Activated naive CD4-positive, alpha-beta T cell treated with anti-CD3 and anti-CD28 coated beads for 36 hours (primary cell): ENCODE measurements at regions of chr17 and their contacts with region 1.

Region 1: GRCh38 chr17:28951991-28952975 is 965 bp upstream of the PHF12 start:
- DNase-seq: peak; percentile 98
- H3K4me3 Mint-ChIP-seq: no peak overlapping the region
- H3K27ac Mint-ChIP-seq: no peak overlapping the region
- H3K4me1 Mint-ChIP-seq: peaks cover 17% of the 10 kb centered on the region
- H3K27me3 Mint-ChIP-seq: no peaks in the 10 kb centered on the region

Region 2: DNA sequence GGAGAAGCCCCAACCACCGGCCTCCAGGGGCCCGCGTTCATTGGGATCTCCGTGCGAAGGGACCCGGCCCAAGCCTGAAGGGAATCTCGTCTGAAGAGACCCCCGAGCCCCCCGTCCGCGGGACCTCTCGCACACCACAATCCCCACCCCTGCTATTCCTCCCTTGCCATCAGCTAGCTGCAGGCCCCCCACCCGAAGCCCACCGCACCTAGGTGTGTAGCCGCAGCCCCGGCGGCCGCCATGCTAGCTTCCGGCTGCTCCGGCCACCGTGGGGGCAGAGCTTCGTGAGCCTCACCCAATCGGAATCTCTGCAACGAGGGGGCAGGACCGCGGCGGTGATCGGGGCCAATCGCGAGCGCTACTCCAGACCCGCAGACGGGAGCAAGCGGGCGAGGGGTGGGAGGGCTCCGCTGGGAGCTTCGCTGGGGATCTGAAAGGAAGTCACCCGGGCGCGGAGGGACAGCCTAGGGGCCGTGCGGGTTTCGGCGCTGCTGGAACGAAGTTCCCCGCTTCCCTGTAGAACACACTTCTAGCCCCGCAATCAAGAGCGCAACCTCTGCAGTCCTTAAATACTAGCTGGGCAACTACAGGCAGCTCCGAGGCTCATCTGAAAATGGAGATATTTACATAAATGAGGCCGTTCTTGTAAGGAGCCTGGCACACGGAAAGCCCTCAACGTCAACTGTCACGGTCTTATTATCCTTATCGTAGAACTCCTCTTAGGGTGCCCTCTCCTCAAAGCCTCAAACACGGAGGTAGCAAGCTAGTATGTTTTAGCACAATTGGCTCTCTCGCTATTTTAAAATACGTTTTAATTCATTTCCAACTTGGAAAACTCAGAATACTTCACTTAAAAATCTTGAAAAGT is 380.8 kb before region 1 on chr17 and contains the start of gene PIGS:
- CTCF ChIA-PET with region 1: no interaction called
- intact Hi-C with region 1: loop called (anchors 10 kb)
- DNase-seq: peak; percentile 96
- H3K4me3 Mint-ChIP-seq: peak within 1 kb of the TSS; percentile 85
- H3K27ac Mint-ChIP-seq: peak within 1 kb of the TSS; percentile 91
- H3K4me1 Mint-ChIP-seq: peaks cover 50% of the 10 kb centered on the region
- H3K27me3 Mint-ChIP-seq: no peaks in the 10 kb centered on the region
- total RNA-seq, gene PIGS: 34.8 to 36.0 TPM

Region 3: DNA sequence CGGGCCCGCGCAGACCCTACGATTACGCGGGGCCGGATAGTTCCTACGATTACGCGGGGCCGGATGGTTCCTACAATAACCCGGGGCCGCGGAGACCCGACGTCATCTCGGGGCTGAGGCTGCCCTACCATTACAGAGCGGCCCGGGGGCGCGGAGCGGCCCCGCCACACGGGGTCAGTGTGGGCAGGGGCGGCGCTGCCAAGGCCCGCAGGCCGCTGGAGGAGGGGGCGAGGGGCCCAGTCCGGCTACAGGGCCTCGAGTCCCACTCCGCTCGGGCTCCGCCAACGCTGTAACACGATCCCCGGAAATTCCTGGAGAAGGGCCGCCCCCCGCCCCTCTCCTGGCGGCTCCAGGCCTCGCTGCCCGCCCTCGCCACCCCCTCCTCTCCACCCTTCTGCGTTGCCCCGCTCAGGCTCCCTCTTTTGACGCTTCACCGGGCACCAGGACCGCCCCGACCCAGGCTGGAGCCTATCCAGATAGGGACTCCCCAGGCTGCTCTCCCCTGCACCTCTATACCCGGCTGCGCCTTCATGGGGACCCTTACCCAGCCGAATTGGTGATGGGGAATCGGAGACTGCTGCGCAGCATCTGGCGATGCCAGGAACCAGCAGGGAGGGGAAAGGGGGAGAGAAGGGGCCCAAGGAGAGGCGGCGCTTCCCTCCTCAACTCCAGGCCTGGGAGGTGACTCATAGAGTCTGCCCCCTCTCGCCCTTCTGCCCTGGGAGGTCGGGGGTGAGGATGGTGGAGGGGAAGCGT is 234.5 kb before region 1 on chr17 and contains the start of gene RAB34:
- CTCF ChIA-PET with region 1: interaction called, 5 read pairs
- intact Hi-C with region 1: loop called (anchors 1 kb)
- DNase-seq: peak; percentile 22
- H3K4me3 Mint-ChIP-seq: peak within 1 kb of the TSS; percentile 66
- H3K27ac Mint-ChIP-seq: peak within 1 kb of the TSS; percentile 59
- H3K4me1 Mint-ChIP-seq: peaks cover 33% of the 10 kb centered on the region
- H3K27me3 Mint-ChIP-seq: peaks cover 25% of the 10 kb centered on the region
- total RNA-seq, gene RAB34: 10.2 to 12.3 TPM

Region 4: DNA sequence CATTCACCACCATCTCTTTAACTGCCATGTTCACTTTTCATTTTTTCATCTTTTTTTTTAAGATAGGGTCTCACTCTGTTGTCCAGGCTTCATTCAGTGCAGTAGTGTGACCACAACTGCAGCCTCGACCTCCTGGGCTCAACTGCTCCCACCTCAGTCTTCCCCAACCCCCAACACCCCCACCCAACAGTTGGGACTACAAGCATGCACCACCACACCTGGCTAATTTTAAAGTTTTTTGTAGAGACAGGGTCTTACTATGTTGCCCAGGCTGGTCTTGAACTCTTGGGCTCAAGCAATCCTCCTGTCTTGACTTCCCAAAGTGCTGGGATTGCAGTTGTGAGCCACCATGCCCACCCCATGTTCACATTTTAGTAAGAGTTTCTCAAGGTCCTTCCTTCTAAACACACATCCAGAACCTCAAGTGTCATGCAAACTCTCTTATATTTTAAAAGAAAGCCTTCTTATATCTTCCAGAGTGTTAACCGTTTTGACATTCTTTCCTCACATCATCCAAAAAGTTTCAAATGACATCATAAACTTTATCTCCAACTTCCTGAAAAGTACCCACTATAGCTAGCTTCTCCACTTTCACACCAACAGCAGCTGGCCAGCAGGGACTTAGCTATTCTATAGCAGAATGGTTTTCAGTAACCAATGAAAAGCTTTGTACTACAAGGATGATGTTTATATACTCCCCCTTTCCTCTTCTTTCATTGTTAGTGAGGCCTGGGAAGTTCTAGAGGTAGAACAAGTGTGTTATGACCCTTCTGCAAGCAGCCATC is 159.2 kb before region 1 on chr17:
- CTCF ChIA-PET with region 1: no interaction called
- intact Hi-C with region 1: no loop called
- DNase-seq: no peak
- H3K4me3 Mint-ChIP-seq: no peak overlapping the region
- H3K27ac Mint-ChIP-seq: no peak overlapping the region
- H3K4me1 Mint-ChIP-seq: peaks cover 29% of the 10 kb centered on the region
- H3K27me3 Mint-ChIP-seq: no peaks in the 10 kb centered on the region

Region 5: GRCh38 chr17:28812091-28812747 is 140.1 kb before region 1 on chr17:
- CTCF ChIA-PET with region 1: no interaction called
- intact Hi-C with region 1: loop called (anchors 1 kb)
- DNase-seq: peak; percentile 98
- H3K4me3 Mint-ChIP-seq: peak overlapping the region; percentile 82
- H3K27ac Mint-ChIP-seq: peak overlapping the region; percentile 86
- H3K4me1 Mint-ChIP-seq: peaks cover 50% of the 10 kb centered on the region
- H3K27me3 Mint-ChIP-seq: no peaks in the 10 kb centered on the region

Region 6: DNA sequence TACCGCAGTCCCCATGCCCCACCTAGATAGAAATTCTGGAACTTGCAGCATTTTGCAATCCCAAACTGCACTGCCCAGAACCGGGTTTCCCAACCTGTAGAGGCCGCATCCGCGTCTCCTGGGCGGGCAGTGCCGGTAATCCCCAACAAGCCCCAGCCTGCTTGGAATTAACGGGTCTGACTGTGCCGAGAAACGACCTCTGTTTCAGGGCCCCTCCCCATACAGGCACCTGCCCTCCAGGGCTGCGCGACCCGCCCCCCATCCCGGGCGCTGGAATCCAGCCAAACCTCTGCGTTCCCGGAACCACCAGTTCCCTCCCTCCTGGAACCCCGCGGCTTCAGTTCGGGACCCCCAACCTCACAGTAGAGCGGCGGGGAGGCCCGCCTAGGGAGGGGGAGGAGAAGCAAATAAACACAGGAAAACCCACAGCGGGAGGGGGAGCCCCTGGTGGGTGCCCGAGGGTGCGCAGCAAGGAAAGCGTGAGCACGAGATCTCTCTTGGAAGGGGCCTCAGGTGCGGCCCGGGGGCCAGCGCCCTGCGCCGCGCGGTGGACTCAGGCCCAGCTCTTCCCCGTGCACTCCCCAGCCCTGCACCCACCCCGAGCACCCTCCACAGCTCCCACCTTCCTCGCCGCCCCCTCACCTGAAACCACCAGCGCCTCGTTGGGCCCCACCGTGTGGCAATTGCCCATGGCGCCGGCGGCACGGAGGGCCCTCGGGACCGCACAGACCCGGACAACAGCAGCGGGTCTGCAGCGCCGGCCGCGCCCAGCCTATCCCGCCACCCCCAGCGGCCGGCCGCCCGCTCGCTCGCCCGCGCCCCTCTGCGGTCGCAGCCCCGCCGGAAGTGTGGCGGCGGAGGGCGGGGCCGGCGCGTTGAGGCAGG is 55.2 kb before region 1 on chr17 and contains the start of gene FLOT2:
- CTCF ChIA-PET with region 1: interaction called, 7 read pairs
- intact Hi-C with region 1: loop called (anchors 1 kb)
- DNase-seq: peak; percentile 88
- H3K4me3 Mint-ChIP-seq: peak within 1 kb of the TSS; percentile 94
- H3K27ac Mint-ChIP-seq: peak within 1 kb of the TSS; percentile 93
- H3K4me1 Mint-ChIP-seq: peaks cover 72% of the 10 kb centered on the region
- H3K27me3 Mint-ChIP-seq: no peaks in the 10 kb centered on the region
- total RNA-seq, gene FLOT2: 66.0 to 71.5 TPM

Region 7: DNA sequence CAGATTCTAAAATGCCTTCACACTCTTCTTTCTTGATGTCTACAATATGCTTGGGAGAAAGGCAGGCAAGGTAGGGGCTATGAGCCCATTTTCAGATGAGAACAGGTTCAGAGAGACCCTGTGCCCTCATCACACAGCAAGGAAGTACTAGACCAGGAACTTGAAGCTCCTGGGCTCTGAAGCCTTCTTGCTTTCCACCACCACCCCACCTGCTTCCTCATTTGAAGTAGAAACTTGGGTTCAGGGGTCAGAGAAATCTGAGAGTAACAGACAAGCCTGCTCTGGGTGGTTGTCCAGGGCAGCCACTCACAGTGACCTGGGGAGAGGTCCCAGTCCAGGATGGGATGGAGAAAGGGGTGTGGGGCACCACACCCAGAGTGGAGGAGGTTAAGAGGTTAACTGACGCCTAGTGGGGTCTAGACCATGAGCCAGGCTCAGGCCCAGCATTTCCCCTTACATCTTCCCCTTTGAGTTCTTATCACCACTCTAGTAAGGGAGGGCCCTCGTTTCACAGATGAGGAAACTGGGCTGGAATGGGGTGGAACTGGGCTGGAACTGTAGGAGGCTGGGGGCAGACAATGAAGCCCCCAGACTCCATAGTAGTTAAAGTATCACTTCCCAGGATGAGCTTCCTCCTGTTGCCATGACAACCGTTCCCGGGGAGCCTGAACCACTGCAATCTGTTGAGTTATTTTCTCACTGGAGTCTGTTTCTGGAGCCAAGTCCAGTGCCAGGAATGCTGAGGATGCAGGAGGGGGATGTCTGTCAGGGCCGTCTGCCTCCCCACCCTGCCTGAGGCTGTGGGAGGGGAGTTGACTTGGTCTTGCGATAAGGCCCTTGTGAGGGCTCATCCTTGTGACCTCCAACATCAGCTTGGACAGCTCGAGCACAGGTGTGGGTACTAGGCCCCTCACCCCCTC is 15.2 kb after region 1 on chr17:
- CTCF ChIA-PET with region 1: interaction called, 26 read pairs
- intact Hi-C with region 1: no loop called
- DNase-seq: no peak
- H3K4me3 Mint-ChIP-seq: no peak overlapping the region
- H3K27ac Mint-ChIP-seq: no peak overlapping the region
- H3K4me1 Mint-ChIP-seq: no peaks in the 10 kb centered on the region
- H3K27me3 Mint-ChIP-seq: peaks cover 4% of the 10 kb centered on the region

Region 8: GRCh38 chr17:29293890-29294579 is 341.8 kb after region 1 on chr17 and contains the start of gene NUFIP2:
- CTCF ChIA-PET with region 1: no interaction called
- intact Hi-C with region 1: loop called (anchors 1 kb)
- DNase-seq: peak; percentile 99
- H3K4me3 Mint-ChIP-seq: peak within 1 kb of the TSS; percentile 100
- H3K27ac Mint-ChIP-seq: peak within 1 kb of the TSS; percentile 99
- H3K4me1 Mint-ChIP-seq: peaks cover 25% of the 10 kb centered on the region
- H3K27me3 Mint-ChIP-seq: no peaks in the 10 kb centered on the region
- total RNA-seq, gene NUFIP2: 51.0 to 57.8 TPM